A549 (cell line): ENCODE measurements at regions of chr17 and their contacts with region 1.

Region 1: DNA sequence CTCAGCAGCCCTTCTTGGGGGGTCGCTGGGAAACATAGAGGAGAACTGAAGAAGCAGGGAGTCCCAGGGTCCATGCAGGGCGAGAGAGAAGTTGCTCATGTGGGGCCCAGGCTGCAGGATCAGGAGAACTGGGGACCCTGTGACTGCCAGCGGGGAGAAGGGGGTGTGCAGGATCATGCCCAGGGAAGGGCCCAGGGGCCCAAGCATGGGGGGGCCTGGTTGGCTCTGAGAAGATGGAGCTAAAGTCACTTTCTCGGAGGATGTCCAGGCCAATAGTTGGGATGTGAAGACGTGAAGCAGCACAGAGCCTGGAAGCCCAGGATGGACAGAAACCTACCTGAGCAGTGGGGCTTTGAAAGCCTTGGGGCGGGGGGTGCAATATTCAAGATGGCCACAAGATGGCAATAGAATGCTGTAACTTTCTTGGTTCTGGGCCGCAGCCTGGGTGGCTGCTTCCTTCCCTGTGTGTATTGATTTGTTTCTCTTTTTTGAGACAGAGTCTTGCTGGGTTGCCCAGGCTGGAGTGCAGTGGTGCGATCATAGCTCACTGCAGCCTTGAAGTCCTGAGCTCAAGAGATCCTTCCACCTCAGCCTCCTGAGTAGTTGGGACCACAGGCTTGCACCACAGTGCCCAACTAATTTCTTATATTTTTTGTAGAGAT is 3.4 kb downstream of the STH start:
- DNase-seq: peak; percentile 69 to 78
- ATAC-seq: peak; percentile 89 to 91
- H3K4me3 ChIP-seq: no peak overlapping the region
- H3K27ac ChIP-seq: peak overlapping the region in 1 of 2 experiments; percentile 61; a peak in 3 of 6 replicates
- H3K4me1 ChIP-seq: peaks cover 15% of the 10 kb centered on the region
- CTCF ChIP-seq: peak; percentile 93
- EP300 ChIP-seq: no peak
- POLR2A ChIP-seq: no peak
- RAD21 ChIP-seq: peak; percentile 96 to 97

Region 2: DNA sequence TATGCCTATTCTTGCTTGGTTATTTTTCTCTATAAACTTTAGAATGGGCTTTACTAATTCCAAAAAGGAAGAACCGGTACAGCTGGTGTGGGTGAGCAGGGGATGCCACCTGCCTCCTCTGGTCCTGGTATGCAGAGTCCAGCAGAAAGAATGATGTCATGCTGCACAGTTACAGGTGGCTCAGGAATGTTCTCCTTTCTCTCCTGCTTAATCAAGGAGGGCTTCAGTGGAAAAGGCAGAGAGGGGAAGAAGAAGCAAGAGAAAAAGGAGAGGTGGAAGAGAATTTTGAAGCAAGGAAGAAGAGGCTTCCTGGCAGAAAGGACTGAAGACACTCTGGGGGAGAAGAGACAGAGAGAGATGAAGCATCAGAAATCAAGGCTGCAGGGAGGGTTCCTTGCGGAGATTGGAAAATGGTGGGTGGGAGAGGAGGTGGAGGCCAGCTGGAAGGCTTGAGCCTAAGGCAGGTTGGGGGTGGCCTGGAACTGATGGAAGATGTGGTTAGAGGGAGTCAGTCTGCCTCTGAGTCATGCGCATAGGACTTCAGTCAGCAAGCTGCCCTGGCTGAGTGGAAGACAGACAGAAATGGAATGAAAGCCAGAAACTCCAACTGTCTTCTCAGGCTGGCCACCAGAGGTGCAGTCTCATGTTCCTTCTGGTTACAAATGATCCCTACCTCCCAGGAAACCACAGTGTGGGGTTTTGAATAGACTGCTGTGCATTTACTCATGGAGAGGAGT is 282.9 kb before region 1 on chr17:
- CTCF ChIA-PET with region 1: no interaction called
- POLR2A ChIA-PET with region 1: no interaction called
- DNase-seq: peak; percentile 77 to 82
- ATAC-seq: peak; percentile 89 to 93
- H3K4me3 ChIP-seq: no peak overlapping the region
- H3K27ac ChIP-seq: no peak overlapping the region
- H3K4me1 ChIP-seq: peaks cover 5% of the 10 kb centered on the region; the same call in 2 of the 3 replicates
- CTCF ChIP-seq: 0 out of 3 replicates have a peak, but pooled peaks have one; percentile 24
- EP300 ChIP-seq: no peak
- POLR2A ChIP-seq: no peak
- RAD21 ChIP-seq: peak in 1 of 2 experiments; percentile 21; a peak in 1 of 5 replicates

Region 3: DNA sequence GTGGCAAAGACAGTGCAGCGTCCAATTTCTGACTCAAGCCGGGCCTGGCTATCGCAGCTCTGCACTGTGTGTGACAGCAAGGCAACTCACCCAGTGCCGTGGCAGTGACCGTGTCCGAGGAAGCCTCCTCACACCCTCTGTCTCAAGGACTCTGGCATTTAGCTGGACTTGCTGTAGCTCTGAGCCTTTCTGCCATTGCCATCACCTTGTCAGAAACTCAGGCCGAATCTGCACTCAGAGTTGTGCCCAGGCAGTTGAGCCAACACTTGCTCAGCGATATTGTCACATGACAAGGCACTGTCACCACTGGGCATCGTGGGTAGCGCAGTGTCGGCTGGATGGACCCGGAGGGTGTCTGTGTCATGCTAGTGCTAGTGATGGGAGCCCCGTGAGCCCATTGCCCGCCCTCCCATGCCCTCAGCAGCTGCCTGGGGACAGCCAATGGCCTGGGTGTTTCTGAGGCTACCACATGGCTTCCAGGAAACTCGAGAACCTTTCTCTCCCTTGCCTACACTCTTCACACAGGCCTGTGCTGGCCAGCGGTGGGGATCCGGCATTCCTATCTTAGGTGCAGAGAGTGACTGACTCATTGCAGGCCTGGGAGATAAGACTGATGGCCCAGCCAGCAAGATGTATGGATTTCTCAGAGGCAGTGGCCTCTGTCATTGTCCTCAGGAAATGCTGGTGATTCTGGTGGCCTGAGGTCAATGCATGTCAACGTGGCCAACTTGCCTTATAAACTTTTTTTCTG is 25.5 kb before region 1 on chr17:
- CTCF ChIA-PET with region 1: interaction called, 16 read pairs
- POLR2A ChIA-PET with region 1: no interaction called
- DNase-seq: no peak
- ATAC-seq: no peak; a peak in 1 of 6 replicates
- H3K4me3 ChIP-seq: no peak overlapping the region
- H3K27ac ChIP-seq: no peak overlapping the region
- H3K4me1 ChIP-seq: no peaks in the 10 kb centered on the region
- CTCF ChIP-seq: no peak
- EP300 ChIP-seq: no peak
- POLR2A ChIP-seq: no peak
- RAD21 ChIP-seq: no peak

Region 4: DNA sequence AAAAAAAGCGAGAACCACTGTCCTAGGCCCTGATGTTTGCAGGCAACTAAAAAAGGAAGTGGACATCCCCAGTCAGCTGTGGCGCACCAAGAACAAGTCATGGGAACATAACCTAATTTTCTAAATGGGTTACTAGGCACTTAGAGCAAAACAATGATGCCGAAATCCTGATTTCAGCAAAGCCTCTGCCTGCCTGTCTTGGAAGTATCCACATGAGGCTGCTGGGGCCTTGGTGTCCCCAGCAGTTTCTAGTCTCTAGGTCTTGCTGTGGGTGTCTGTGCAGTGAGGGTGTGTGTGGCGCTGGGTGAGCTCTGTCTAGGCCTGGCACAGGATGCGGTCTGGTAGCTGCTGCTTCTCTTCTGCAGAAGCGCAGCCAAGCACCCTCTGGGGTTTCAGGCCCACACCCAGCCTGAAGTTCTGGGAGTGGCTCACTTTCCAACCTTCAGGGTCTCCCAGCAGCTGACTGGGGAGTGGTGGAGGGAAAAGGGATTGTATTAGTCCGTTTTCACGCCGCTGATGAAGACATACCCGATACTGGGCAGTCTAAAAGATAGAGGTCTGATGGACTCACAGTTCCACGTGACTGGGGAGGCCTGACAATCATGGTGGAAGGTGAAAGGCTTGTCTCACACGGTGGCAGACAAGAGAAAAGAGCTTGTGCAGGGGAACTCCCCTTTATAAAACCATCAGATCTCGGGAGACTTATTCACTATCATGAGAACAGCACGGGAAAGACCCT is 17.8 kb after region 1 on chr17:
- CTCF ChIA-PET with region 1: interaction called, 127 read pairs
- POLR2A ChIA-PET with region 1: no interaction called
- DNase-seq: no peak
- ATAC-seq: no peak
- H3K4me3 ChIP-seq: no peak overlapping the region
- H3K27ac ChIP-seq: no peak overlapping the region
- H3K4me1 ChIP-seq: no peaks in the 10 kb centered on the region
- CTCF ChIP-seq: no peak
- EP300 ChIP-seq: no peak
- POLR2A ChIP-seq: no peak
- RAD21 ChIP-seq: no peak

Region 5: DNA sequence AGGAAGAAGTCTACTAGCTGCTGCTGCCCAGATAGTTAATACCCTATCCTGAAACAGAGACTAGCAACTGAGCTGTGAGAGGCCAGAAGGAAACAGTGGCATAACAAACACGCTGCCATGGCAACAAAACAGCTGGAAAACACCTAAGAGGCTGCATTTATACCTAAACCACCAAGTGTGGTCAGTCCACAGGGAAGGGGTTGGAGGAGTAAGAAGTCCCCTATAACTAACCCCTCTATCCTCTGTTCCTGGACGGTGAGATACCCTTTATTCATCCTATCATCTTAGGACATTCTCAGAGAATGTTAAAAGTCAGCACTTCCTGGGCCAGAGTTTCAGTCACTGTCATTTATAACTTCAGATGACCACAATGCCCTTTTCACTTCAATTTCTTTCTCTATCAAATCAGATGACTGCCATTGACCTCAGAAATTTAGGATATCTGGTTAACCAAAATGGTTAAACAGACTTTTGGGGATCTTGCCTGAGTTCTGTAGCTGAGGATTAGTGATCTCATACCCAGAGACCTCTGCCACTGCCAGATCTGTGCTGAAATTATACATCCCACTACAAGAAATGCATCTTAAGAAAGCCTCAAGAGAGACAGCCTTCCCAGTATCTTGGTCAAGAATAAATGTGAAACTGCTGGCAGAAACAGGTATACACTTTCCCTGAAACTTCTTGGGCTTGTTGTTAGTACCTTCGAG is 32.8 kb after region 1 on chr17:
- CTCF ChIA-PET with region 1: interaction called, 20 read pairs
- POLR2A ChIA-PET with region 1: no interaction called
- DNase-seq: no peak
- ATAC-seq: no peak; a peak in 1 of 6 replicates
- H3K4me3 ChIP-seq: no peak overlapping the region
- H3K27ac ChIP-seq: no peak overlapping the region
- H3K4me1 ChIP-seq: no peaks in the 10 kb centered on the region
- CTCF ChIP-seq: no peak
- EP300 ChIP-seq: no peak
- POLR2A ChIP-seq: no peak
- RAD21 ChIP-seq: no peak

Region 6: GRCh38 chr17:46154151-46154816 is 151.8 kb after region 1 on chr17:
- CTCF ChIA-PET with region 1: interaction called, 13 read pairs
- POLR2A ChIA-PET with region 1: no interaction called
- DNase-seq: no peak
- ATAC-seq: peak; percentile 15 to 17; a peak in 3 of 6 replicates
- H3K4me3 ChIP-seq: no peak overlapping the region
- H3K27ac ChIP-seq: no peak overlapping the region
- H3K4me1 ChIP-seq: peaks cover 78% of the 10 kb centered on the region
- CTCF ChIP-seq: no peak
- EP300 ChIP-seq: no peak
- POLR2A ChIP-seq: no peak
- RAD21 ChIP-seq: no peak

Region 7: DNA sequence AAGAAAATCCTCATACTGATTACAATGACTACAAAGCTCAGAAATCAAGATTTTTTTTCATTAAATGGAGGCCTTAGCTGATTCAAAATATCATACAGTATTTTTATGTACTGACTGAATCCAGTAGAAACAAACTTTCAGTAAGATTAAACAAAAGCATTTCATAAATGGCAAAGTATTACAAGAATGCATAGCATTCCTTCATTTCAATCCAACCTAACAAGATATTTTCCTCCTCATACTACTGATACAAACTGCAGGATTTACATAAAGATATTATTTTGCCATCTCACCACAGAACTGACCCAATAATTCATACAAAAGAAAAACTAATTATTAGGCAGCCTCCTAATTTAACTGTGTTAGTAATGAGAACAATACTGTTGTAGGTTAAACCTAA is 196.9 kb after region 1 on chr17:
- CTCF ChIA-PET with region 1: interaction called, 186 read pairs
- POLR2A ChIA-PET with region 1: no interaction called
- DNase-seq: no peak
- ATAC-seq: no peak
- H3K4me3 ChIP-seq: no peak overlapping the region
- H3K27ac ChIP-seq: no peak overlapping the region
- H3K4me1 ChIP-seq: peaks cover 54% of the 10 kb centered on the region
- CTCF ChIP-seq: no peak
- EP300 ChIP-seq: no peak
- POLR2A ChIP-seq: no peak
- RAD21 ChIP-seq: no peak

Region 8: GRCh38 chr17:46266656-46267544 is 264.5 kb after region 1 on chr17:
- CTCF ChIA-PET with region 1: interaction called, 16 read pairs
- POLR2A ChIA-PET with region 1: no interaction called
- DNase-seq: peak; percentile 94 to 98
- ATAC-seq: peak; percentile 88 to 93
- H3K4me3 ChIP-seq: peak overlapping the region; percentile 58
- H3K27ac ChIP-seq: peak overlapping the region; percentile 87 to 88
- H3K4me1 ChIP-seq: peaks cover 20% of the 10 kb centered on the region; the same call in 2 of the 3 replicates
- CTCF ChIP-seq: peak; percentile 6; the same call in 1 of the 3 replicates
- EP300 ChIP-seq: no peak
- POLR2A ChIP-seq: peak; percentile 80
- RAD21 ChIP-seq: peak in 1 of 2 experiments; percentile 34; a peak in 1 of 5 replicates